Thyroid gland (tissue), 4 donors: ENCODE measurements at regions of chr14 and their contacts with region 1.

Region 1: GRCh38 chr14:49767562-49768300 is at the start of gene KLHDC2:
- DNase-seq: peak; percentile 88 to 91
- H3K4me3 ChIP-seq: peak within 1 kb of the TSS; percentile 76 to 100 (median 96)
- H3K27ac ChIP-seq: peak within 1 kb of the TSS; percentile 99 to 100 (median 99)
- H3K4me1 ChIP-seq: peaks cover 14 to 28% of the 10 kb centered on the region in 2 donors
- H3K27me3 ChIP-seq: no peaks in the 10 kb centered on the region
- CTCF ChIP-seq: peak in 2 of 6 experiments; percentile 40 to 57
- POLR2A ChIP-seq: peak; percentile 96 to 99
- total RNA-seq, gene KLHDC2: 101 to 165 (median 133) TPM

Region 2: GRCh38 chr14:49692811-49693734 is 74.7 kb before region 1 on chr14 and contains the start of gene KLHDC1:
- intact Hi-C with region 1: loop called (anchors 10 kb)
- DNase-seq: peak; percentile 87 to 89
- H3K4me3 ChIP-seq: peak within 1 kb of the TSS; percentile 24 to 59 (median 48)
- H3K27ac ChIP-seq: peak within 1 kb of the TSS; percentile 92 to 98 (median 93)
- H3K4me1 ChIP-seq: peaks cover 4 to 14% of the 10 kb centered on the region in 2 donors
- H3K27me3 ChIP-seq: no peaks in the 10 kb centered on the region
- CTCF ChIP-seq: no peak
- POLR2A ChIP-seq: peak; percentile 86 to 95
- total RNA-seq, gene KLHDC1: 9.2 to 16.3 (median 12.4) TPM

Region 3: DNA sequence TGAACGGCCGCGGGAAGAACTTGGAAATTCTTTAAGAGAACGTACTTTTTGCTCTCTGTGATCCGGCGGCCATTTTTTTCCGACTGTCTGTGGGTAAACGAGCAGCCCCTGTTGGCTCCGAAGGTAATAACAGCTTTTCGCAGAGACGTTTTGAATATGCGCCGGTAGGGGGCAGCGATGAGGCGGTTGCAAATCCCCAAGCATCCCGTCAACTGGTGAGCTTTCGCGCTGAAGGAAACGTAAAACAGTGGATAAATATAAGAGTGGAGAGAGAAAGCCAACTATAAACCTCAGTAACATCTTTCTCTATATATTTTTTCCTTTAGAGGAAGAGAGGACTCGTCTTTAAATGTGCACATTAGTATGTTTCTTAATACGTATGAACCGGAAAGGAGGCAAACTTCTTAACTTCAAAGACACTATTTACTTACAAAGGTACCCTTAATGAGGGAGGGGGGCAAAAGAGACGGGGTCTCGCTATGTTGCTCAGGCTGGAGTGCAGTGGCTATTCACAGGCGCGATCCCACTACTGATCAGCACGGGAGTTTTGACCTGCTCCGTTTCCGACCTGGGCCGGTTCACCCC is 94.5 kb after region 1 on chr14:
- intact Hi-C with region 1: no loop called
- DNase-seq: peak; percentile 80 to 87
- H3K4me3 ChIP-seq: peak overlapping the region in 2 of 3 donors; percentile 26 to 59
- H3K27ac ChIP-seq: peak overlapping the region; percentile 95 to 99 (median 99)
- H3K4me1 ChIP-seq: peaks cover 0 to 6% of the 10 kb centered on the region in 2 donors
- H3K27me3 ChIP-seq: no peaks in the 10 kb centered on the region
- CTCF ChIP-seq: peak; percentile 100
- POLR2A ChIP-seq: no peak